ENCODE measurements at regions of chr12 and their contacts with region 1.

Region 1: DNA sequence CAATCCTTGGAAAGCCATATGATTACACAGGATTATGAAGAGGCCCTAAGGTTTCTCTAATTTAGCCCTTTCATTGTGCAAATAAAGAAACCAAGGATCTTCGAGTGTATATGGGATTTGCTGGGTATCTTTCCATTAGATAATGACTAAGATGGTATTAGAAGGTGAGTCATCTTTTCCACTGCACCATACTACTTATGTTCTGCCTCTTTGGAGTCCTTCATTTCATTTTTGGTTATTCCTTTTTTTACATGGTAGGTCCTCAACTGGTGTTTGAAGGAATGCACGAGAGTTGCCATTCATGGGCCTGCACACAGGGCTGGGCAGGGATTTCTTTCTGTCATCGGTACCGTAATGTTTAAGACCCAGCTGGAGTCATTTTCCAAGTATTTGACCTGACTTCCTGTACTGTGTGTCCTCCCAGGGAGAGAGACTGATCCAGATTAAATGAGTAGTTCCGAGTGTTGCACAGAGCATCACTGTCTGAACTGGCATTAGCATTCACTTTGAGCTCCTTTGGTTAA is 85.7 kb downstream of the BORCS5 start:
- DNase-seq: peak in 1 of 35 experiments; percentile 50
- ATAC-seq: peak in 1 of 4 experiments; percentile 1
- H3K4me3 ChIP-seq: no peak overlapping the region
- H3K4me3 Mint-ChIP-seq: peak overlapping the region in 2 of 3 donors; percentile 5 to 63
- H3K27ac ChIP-seq: peak overlapping the region; percentile 96
- H3K27ac Mint-ChIP-seq: peak overlapping the region; percentile 92 to 94
- H3K4me1 ChIP-seq: peaks cover 33 to 70% of the 10 kb centered on the region in 2 experiments
- H3K4me1 Mint-ChIP-seq: peaks cover 57 to 92% (median 89%) of the 10 kb centered on the region in 3 donors
- H3K27me3 ChIP-seq: no peaks in the 10 kb centered on the region
- H3K27me3 Mint-ChIP-seq: no peaks in the 10 kb centered on the region

Region 2: GRCh38 chr12:11730299-11731041 is 712.1 kb before region 1 on chr12:
- CTCF ChIA-PET with region 1: no interaction called
- POLR2A ChIA-PET with region 1: no interaction called
- DNase-seq: peak in 1 of 35 experiments; percentile 14
- ATAC-seq: peak in 1 of 4 experiments; percentile 7
- H3K4me3 ChIP-seq: peak overlapping the region in 1 of 2 donors; percentile 15
- H3K4me3 Mint-ChIP-seq: peak overlapping the region; percentile 62 to 69 (median 62)
- H3K27ac ChIP-seq: peak overlapping the region; percentile 35
- H3K27ac Mint-ChIP-seq: peak overlapping the region; percentile 94 to 95
- H3K4me1 ChIP-seq: peaks cover 34 to 55% of the 10 kb centered on the region in 2 experiments
- H3K4me1 Mint-ChIP-seq: peaks cover 68 to 84% (median 72%) of the 10 kb centered on the region in 3 donors
- H3K27me3 ChIP-seq: no peaks in the 10 kb centered on the region
- H3K27me3 Mint-ChIP-seq: no peaks in the 10 kb centered on the region

Region 3: DNA sequence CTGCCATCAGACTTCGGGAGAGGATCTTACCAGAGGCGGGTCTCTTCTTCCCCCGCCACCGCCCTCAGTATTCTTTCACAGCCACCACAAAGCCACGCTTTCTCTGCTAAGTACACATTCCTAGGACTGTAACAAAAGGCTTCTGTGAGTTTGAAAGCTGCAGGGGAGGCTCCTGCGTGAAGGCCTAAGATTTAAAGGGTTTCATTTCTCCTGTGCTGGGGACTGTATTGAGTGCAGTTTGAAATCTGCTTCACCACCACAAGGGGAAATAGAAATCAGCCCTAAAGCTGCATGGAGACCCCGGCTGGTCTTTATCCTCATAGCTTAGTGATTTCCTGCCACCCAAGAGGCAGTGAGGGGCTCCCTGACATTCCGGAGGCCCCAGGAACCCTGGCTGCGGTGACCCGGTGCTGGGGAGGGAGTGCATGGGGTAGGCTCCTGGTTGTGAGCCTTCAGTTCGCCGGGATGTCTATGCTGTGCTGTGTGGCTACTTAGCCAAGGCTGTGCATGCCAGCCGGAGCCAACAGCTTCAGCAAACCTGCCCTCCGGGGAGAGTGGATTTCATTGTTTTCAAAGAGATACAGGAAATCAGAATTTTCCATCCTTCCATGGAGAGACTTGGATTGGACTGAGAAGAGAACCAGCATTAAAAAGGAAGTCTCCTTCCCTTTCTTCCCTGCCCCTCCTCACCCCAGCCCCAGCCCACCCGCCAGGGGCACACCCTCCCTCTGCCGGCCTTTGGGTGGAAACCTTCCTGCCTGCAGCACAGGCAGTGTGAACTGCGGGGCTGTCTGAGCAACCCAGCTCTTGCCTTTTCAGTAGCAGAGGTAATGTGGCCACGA is 629.8 kb before region 1 on chr12:
- CTCF ChIA-PET with region 1: no interaction called
- POLR2A ChIA-PET with region 1: no interaction called
- DNase-seq: peak in 10 of 35 experiments; percentile 5 to 31 (median 14)
- ATAC-seq: peak; percentile 59 to 77 (median 74)
- H3K4me3 ChIP-seq: peak overlapping the region; percentile 20 to 28
- H3K4me3 Mint-ChIP-seq: peak overlapping the region; percentile 44 to 61 (median 55)
- H3K27ac ChIP-seq: no peak overlapping the region
- H3K27ac Mint-ChIP-seq: peak overlapping the region; percentile 82 to 91
- H3K4me1 ChIP-seq: peaks cover 3 to 17% of the 10 kb centered on the region in 2 experiments
- H3K4me1 Mint-ChIP-seq: peaks cover 39 to 62% (median 42%) of the 10 kb centered on the region in 3 donors
- H3K27me3 ChIP-seq: no peaks in the 10 kb centered on the region
- H3K27me3 Mint-ChIP-seq: no peaks in the 10 kb centered on the region

Region 4: GRCh38 chr12:12398026-12398859 is 44.4 kb before region 1 on chr12:
- CTCF ChIA-PET with region 1: interaction called in 1 of 2 experiments, 3 read pairs
- POLR2A ChIA-PET with region 1: interaction called in 1 of 2 experiments, 10 read pairs
- DNase-seq: no peak
- ATAC-seq: no peak
- H3K4me3 ChIP-seq: no peak overlapping the region
- H3K4me3 Mint-ChIP-seq: no peak overlapping the region
- H3K27ac ChIP-seq: no peak overlapping the region
- H3K27ac Mint-ChIP-seq: peak overlapping the region in 1 of 2 donors; percentile 28
- H3K4me1 ChIP-seq: peaks cover 0 to 4% of the 10 kb centered on the region in 2 experiments
- H3K4me1 Mint-ChIP-seq: peaks cover 28 to 60% (median 59%) of the 10 kb centered on the region in 3 donors
- H3K27me3 ChIP-seq: no peaks in the 10 kb centered on the region
- H3K27me3 Mint-ChIP-seq: no peaks in the 10 kb centered on the region

Region 5: GRCh38 chr12:12467688-12468261 is 25.2 kb after region 1 on chr12:
- CTCF ChIA-PET with region 1: interaction called in 1 of 2 experiments, 21 read pairs
- POLR2A ChIA-PET with region 1: interaction called in 1 of 2 experiments, 28 read pairs
- DNase-seq: peak in 32 of 35 experiments; percentile 13 to 71 (median 40)
- ATAC-seq: peak; percentile 16 to 57 (median 34)
- H3K4me3 ChIP-seq: no peak overlapping the region
- H3K4me3 Mint-ChIP-seq: peak overlapping the region; percentile 50 to 53 (median 53)
- H3K27ac ChIP-seq: peak overlapping the region; percentile 95
- H3K27ac Mint-ChIP-seq: peak overlapping the region; percentile 94 to 95
- H3K4me1 ChIP-seq: peaks cover 23 to 53% of the 10 kb centered on the region in 2 experiments
- H3K4me1 Mint-ChIP-seq: peaks cover 60 to 87% (median 77%) of the 10 kb centered on the region in 3 donors
- H3K27me3 ChIP-seq: no peaks in the 10 kb centered on the region
- H3K27me3 Mint-ChIP-seq: no peaks in the 10 kb centered on the region

Region 6: DNA sequence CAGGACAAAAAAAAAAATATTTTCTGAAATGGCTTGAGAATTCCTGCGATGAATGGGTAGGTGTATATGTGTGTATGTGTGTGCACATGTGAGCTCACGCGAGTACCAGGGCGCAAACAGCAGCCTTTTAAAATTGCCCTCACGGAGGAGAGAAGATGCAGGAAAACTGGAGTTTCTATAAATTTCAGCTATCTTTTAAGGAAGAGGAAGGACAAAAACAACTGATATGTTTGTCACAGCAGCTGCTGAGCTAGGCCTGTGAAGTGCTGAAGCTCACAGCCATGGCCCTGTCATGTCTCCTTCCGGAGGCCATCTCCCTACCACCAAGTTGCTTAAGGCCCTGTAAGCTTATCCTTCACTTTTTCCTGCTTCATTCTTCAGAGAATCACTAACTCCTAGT is 79.3 kb after region 1 on chr12:
- CTCF ChIA-PET with region 1: no interaction called
- POLR2A ChIA-PET with region 1: interaction called in 1 of 2 experiments, 15 read pairs
- DNase-seq: no peak
- ATAC-seq: no peak
- H3K4me3 ChIP-seq: no peak overlapping the region
- H3K4me3 Mint-ChIP-seq: no peak overlapping the region
- H3K27ac ChIP-seq: no peak overlapping the region
- H3K27ac Mint-ChIP-seq: peak overlapping the region in 1 of 2 donors; percentile 71
- H3K4me1 ChIP-seq: peaks cover 0 to 3% of the 10 kb centered on the region in 2 experiments
- H3K4me1 Mint-ChIP-seq: peaks cover 30 to 62% (median 60%) of the 10 kb centered on the region in 3 donors
- H3K27me3 ChIP-seq: no peaks in the 10 kb centered on the region
- H3K27me3 Mint-ChIP-seq: no peaks in the 10 kb centered on the region

Region 7: GRCh38 chr12:12606781-12607589 is 164.4 kb after region 1 on chr12:
- CTCF ChIA-PET with region 1: no interaction called
- POLR2A ChIA-PET with region 1: interaction called in 1 of 2 experiments, 13 read pairs
- DNase-seq: no peak
- ATAC-seq: no peak
- H3K4me3 ChIP-seq: no peak overlapping the region
- H3K4me3 Mint-ChIP-seq: peak overlapping the region in 1 of 3 donors; percentile 35
- H3K27ac ChIP-seq: no peak overlapping the region
- H3K27ac Mint-ChIP-seq: peak overlapping the region; percentile 54 to 77
- H3K4me1 ChIP-seq: peaks cover 5 to 8% of the 10 kb centered on the region in 2 experiments
- H3K4me1 Mint-ChIP-seq: peaks cover 25 to 29% (median 25%) of the 10 kb centered on the region in 3 donors
- H3K27me3 ChIP-seq: no peaks in the 10 kb centered on the region
- H3K27me3 Mint-ChIP-seq: no peaks in the 10 kb centered on the region